Dorsolateral prefrontal cortex (tissue), 120 donors: ENCODE measurements at regions of chr19 and their contacts with region 1.

Region 1: DNA sequence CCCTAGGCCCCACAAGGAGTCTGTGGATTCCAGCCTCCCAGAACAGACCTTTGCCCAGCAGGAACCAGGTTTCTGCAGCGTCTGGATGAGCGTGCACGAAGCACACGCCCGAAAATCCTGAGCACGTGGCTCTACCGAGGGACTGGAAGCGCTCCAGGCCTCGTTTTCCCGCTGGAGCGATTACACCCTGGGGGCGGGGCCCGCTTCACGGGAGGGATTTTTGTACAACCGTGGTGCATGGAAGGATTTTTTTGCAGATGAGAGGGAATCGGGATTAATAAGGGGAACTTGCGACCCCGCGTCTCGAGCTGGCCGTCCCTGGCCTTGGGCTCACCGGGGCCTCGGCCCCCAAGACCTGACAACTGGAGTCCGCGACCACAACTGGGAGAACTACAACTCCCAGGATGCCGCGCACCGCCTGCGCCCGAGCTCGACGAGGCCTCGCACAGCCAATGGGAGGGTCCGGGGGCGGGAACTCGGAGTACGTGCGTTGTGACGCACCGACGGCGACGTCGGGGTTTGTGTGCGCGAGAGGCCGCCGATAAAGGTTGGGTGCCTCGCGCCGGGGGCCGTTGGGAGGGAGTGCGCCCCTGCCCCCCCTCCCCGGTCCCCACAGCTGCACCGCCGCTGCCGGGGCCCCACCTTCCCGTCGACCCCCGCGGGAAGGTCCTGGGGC is at the start of gene ZNF628:
- DNase-seq: peak; percentile 99 to 100 (median 99)
- H3K4me3 ChIP-seq: peak within 1 kb of the TSS; percentile 49 to 92 (median 70)
- H3K27ac ChIP-seq: peak within 1 kb of the TSS; percentile 86 to 99 (median 96)
- H3K27me3 ChIP-seq: no peaks in the 10 kb centered on the region
- CTCF ChIP-seq: peak in 4 of 56 donors; percentile 11 to 24 (median 14)
- total RNA-seq, gene ZNF628: 3.1 to 14.2 (median 6.2) TPM

Region 2: GRCh38 chr19:55599468-55600279 is 123.4 kb after region 1 on chr19 and contains the start of gene FIZ1:
- intact Hi-C with region 1: loop called in 1 of 2 experiments (anchors 2 kb)
- DNase-seq: peak; percentile 97 to 99 (median 98)
- H3K4me3 ChIP-seq: peak within 1 kb of the TSS; percentile 64 to 99 (median 90)
- H3K27ac ChIP-seq: peak within 1 kb of the TSS; percentile 93 to 100 (median 99)
- H3K27me3 ChIP-seq: no peaks in the 10 kb centered on the region
- CTCF ChIP-seq: peak in 8 of 56 donors; percentile 3 to 36 (median 6)
- total RNA-seq, gene FIZ1: 18.3 to 50.0 (median 30.3) TPM